AG04450 (cell line): ENCODE measurements at regions of chr1 and their contacts with region 1.

Region 1: GRCh38 chr1:154220071-154220969 is at the start of gene UBAP2L:
- DNase-seq: peak; percentile 98
- H3K4me3 ChIP-seq: peak within 1 kb of the TSS; percentile 95
- H3K27ac ChIP-seq: peak within 1 kb of the TSS; percentile 99
- H3K27me3 ChIP-seq: no peaks in the 10 kb centered on the region
- CTCF ChIP-seq: no peak
- polyA plus RNA-seq, gene UBAP2L: 173 and 177 TPM in 2 replicates

Region 2: GRCh38 chr1:153866045-153866850 is 354.1 kb before region 1 on chr1:
- CTCF ChIA-PET with region 1: no interaction called
- POLR2A ChIA-PET with region 1: interaction called, 10 read pairs
- DNase-seq: peak; percentile 26
- H3K4me3 ChIP-seq: no peak overlapping the region
- H3K27ac ChIP-seq: no peak overlapping the region
- H3K27me3 ChIP-seq: no peaks in the 10 kb centered on the region
- CTCF ChIP-seq: no peak

Region 3: DNA sequence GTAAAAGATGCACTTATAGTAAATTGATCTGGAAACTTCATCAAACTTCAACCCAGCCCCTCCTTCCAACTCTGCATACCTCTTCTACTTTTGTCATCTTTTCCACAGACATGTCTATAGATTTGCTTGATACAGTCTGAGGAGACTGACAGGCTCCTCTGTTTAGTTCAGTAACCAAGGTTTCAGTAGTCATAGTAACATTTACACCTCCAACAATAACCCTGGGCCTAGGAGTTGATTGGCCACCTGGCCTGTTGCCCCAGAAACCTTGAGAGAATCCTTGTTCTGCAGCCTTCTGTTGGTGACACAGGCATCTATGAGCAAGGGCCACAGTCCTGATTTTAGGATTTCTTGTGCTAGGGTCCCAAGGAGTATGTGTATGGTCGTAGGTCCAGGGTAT is 14.1 kb before region 1 on chr1 and contains the start of gene CFAP141:
- CTCF ChIA-PET with region 1: no interaction called
- POLR2A ChIA-PET with region 1: interaction called, 11 read pairs
- DNase-seq: no peak
- H3K4me3 ChIP-seq: no peak within 1 kb of the TSS
- H3K27ac ChIP-seq: no peak within 1 kb of the TSS
- H3K27me3 ChIP-seq: no peaks in the 10 kb centered on the region
- CTCF ChIP-seq: no peak
- polyA plus RNA-seq, gene CFAP141: not detected in 2 replicates

Region 4: GRCh38 chr1:154398141-154398540 is 177.8 kb after region 1 on chr1:
- CTCF ChIA-PET with region 1: no interaction called
- POLR2A ChIA-PET with region 1: no interaction called
- DNase-seq: no peak
- H3K4me3 ChIP-seq: no peak overlapping the region
- H3K27ac ChIP-seq: no peak overlapping the region
- H3K27me3 ChIP-seq: peaks cover 14% of the 10 kb centered on the region
- CTCF ChIP-seq: no peak